Dendritic cell treated with granulocyte-macrophage colony-stimulating factor and Interleukin-4, amounts not matched to agents 40 ng/mL and 50 ng/mL, for 4 days (primary cell): ENCODE measurements at regions of chr2 and their contacts with region 1.

Region 1: GRCh38 chr2:134918526-134919340 is at the start of gene CCNT2:
- H3K4me3 Mint-ChIP-seq: peak within 1 kb of the TSS; percentile 98
- H3K27ac Mint-ChIP-seq: peak within 1 kb of the TSS; percentile 99
- H3K4me1 Mint-ChIP-seq: peaks cover 18% of the 10 kb centered on the region
- H3K27me3 Mint-ChIP-seq: no peaks in the 10 kb centered on the region

Region 2: DNA sequence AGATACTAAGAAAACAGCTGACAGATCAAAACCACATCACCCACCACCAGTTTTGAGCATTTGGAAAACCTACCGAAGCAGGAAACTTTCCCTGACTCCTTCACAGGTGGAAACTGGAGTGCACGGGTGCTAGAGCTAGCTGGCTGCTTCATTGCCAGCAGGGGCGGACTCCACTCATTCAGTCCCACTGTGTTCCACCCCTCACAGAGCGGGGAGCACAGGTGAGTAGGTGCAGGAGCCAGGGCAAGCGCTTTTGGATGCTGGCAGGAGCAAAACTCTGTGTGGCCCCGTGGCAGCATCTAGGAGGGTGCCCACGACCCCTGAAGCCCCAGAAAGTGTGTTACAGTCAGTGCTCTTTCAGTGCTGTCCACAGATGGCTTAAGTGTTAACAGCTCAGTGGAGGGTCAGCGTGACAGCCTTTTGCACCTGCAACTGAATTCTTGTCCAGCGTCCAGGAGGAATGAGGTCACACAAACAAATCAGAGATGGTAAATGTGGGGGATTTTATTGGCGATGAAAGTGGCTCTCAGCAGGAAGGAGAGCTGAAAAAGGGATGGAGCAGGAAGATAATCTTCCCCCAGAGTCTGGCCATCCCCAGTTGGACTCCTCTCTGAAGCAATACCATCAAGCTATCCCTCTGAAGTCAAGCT is 271.0 kb before region 1 on chr2:
- intact Hi-C with region 1: no loop called
- H3K4me3 Mint-ChIP-seq: no peak overlapping the region
- H3K27ac Mint-ChIP-seq: no peak overlapping the region
- H3K4me1 Mint-ChIP-seq: no peaks in the 10 kb centered on the region
- H3K27me3 Mint-ChIP-seq: no peaks in the 10 kb centered on the region

Region 3: DNA sequence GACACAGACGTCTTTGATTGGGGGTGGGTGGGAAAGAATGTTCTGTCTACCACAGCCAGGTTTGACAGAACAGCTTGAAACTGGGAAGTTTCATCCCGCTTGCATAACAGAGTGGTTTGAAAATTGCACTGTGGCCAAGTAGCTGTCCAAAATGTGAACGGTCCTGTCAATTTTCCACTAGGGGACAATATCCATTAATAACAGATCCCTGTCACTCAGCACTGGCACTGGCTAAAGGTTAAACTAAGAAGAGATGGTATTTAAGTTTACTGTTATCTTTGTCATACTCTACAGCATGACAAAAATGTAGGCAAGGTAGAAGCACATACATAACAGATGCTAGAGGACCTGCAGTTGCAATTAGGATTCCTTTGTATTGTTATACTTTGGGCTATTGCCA is 135.9 kb before region 1 on chr2:
- intact Hi-C with region 1: loop called (anchors 10 kb)
- H3K4me3 Mint-ChIP-seq: no peak overlapping the region
- H3K27ac Mint-ChIP-seq: no peak overlapping the region
- H3K4me1 Mint-ChIP-seq: peaks cover 38% of the 10 kb centered on the region
- H3K27me3 Mint-ChIP-seq: peaks cover 1% of the 10 kb centered on the region

Region 4: DNA sequence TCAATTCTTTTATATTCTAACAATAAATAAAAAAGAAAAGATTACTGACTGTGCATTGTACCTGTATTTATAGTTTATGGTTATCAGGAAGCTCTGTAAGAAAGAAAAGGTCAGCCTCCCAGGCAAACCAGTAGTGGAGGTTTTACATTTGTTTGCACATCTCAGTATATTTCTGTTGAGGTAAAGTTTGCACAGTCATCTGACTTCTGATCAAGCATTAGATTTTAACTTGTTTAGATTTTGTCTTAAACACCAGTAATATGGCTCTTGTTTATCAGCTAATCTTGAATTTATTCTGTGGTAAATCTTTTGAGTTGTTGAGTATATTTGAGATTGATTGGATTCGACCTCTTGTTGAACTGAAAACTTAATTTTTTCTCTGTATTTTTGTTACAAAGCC is 37.1 kb after region 1 on chr2:
- intact Hi-C with region 1: loop called (anchors 5 kb)
- H3K4me3 Mint-ChIP-seq: no peak overlapping the region
- H3K27ac Mint-ChIP-seq: no peak overlapping the region
- H3K4me1 Mint-ChIP-seq: peaks cover 22% of the 10 kb centered on the region
- H3K27me3 Mint-ChIP-seq: no peaks in the 10 kb centered on the region

Region 5: GRCh38 chr2:135021618-135022017 is 102.9 kb after region 1 on chr2:
- intact Hi-C with region 1: no loop called
- H3K4me3 Mint-ChIP-seq: no peak overlapping the region
- H3K27ac Mint-ChIP-seq: no peak overlapping the region
- H3K4me1 Mint-ChIP-seq: no peaks in the 10 kb centered on the region
- H3K27me3 Mint-ChIP-seq: peaks cover 1% of the 10 kb centered on the region

Region 6: DNA sequence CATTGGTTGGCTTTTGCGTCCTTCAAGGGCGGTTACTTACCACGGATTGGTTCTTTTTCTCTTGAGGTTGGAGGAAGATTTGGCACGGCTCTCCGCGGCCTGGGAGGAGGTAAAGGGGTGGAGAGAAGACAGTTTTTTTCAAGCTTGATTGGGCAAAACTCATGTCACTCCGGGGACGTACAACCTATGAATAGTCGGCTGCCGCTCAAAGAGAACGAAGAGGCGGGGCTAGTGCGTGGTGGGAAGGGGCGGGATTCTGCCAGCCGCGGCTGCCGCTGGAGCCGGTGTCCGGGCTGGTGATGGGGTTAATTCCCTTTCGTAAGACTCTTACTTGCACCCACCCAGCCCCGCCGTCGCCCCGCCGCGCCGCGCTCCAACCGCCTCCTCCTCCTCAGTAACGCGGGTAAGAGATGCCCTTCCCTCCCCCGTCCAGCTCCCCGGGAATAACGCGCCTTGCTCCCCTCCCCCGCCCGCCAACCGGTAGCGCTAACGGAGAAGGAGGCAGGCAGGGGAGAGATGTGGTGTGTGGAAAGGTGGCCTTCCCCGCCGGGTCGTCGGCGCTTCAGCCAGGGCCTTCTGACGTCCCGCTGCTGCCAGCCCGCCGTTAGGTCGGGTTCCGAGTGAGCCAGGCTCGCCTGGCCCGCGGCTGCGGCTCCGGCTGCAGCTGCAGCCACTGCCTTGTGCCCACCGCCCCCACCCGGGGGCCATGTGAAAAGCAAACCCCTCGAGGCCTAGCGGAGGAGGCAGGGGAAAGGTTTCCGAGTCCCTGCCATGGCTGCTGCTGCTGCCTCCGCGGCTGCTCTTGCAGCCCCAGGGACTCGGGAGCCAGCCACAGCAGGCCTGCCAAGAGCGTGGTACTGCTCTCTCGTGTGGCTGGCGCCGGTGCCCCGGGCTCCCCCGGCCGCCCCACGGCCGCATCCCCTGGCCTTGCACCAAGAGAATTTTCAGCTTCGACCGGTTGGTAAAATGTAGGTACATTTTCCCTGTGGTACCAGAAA is 612.8 kb after region 1 on chr2 and contains the start of gene R3HDM1:
- intact Hi-C with region 1: loop called (anchors 1 kb)
- H3K4me3 Mint-ChIP-seq: no peak within 1 kb of the TSS
- H3K27ac Mint-ChIP-seq: no peak within 1 kb of the TSS
- H3K4me1 Mint-ChIP-seq: peaks cover 5% of the 10 kb centered on the region
- H3K27me3 Mint-ChIP-seq: no peaks in the 10 kb centered on the region